Activated CD4-positive, alpha-beta T cell treated with anti-CD3 and anti-CD28 coated beads, Interleukin-2, amount 10 ng/mL, durations not matched to agents 24 days and 14 days (primary cell): ENCODE measurements at regions of chr11 and their contacts with region 1.

Region 1: GRCh38 chr11:57335343-57336110 is at the start of gene SSRP1:
- DNase-seq: peak; percentile 95
- H3K4me3 Mint-ChIP-seq: peak within 1 kb of the TSS; percentile 93
- H3K27ac Mint-ChIP-seq: peak within 1 kb of the TSS; percentile 99
- H3K4me1 Mint-ChIP-seq: peaks cover 35% of the 10 kb centered on the region
- H3K27me3 Mint-ChIP-seq: no peaks in the 10 kb centered on the region
- total RNA-seq, gene SSRP1: 253 and 256 TPM in 2 replicates

Region 2: DNA sequence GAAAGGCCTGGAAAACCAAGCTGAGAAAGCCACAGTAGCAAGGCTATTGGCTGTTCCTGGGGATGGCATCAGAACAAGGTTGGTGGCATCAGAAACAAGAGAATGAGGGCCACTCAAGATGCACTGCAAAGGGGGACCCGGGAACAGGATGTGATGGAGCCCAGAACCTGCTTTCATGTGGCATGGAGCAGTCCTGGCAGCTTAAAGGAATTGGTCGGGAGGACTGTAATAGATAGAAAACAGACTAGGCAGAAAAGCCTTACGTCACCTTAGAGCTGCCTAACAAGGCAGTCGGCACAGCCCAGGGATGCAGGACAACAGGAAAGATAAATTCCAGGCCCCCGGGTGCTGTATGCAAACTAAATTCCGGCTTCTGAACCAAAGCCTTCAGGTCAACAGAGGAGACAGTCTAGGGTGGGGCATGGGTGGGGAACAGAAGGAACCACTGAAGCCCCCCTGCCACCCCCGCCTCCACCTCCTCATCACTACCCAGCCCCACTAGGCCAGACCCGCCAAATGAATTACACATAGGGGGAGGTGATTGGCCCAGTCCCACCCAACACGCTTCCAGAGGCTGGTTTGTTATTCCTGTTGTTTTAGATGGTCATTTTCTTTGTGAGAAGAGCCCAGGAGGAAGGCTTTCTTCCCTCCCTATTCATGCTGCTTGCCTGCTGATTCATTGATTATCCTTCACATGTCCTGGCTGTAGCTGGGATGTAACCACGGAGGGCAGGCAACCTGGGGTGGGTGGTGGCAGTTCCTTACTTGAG is 179.5 kb before region 1 on chr11:
- intact Hi-C with region 1: no loop called
- DNase-seq: no peak
- H3K4me3 Mint-ChIP-seq: no peak overlapping the region
- H3K27ac Mint-ChIP-seq: no peak overlapping the region
- H3K4me1 Mint-ChIP-seq: no peaks in the 10 kb centered on the region
- H3K27me3 Mint-ChIP-seq: peaks cover 8% of the 10 kb centered on the region

Region 3: DNA sequence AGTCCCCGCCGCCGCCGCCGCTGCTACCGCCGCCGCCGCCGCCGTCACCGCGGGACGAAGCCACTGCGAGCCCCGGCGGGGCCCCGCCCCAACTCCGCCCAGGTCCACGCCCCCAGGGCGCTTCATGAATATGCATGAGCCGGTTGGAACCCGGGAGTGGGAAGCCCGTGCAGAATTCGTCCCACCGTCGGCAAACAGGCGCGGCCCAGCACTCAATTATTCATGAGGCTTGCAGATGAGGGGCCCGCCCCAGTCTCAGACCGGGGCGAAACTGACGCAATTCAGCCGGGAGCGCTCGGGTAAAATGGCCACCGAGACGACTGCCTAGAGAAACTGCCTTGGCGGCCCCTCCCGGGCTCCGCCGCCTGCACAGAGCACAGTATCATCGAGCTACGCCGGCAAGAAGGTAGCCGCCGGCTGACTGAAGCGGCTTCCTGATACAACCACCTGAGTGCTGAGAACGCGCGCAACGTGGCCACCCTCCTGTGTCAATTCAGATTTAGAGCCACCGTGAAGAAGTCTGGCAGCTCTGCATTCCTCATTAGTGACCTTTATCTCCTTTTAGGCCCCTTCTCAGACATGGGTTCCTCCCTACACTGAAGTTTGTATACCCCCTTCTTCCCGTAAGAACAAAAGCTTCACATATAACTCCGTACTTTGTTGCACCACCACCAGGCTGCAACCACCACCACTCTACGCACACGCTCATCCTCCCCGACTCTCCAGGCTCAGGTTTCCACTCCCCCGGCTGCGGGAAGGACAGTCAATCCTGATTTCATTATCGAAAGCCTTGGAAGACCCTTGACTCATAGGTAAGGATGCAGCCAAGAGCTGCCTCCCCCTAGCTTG is 10.4 kb before region 1 on chr11 and contains the start of gene TNKS1BP1:
- intact Hi-C with region 1: loop called (anchors 1 kb)
- DNase-seq: peak; percentile 96
- H3K4me3 Mint-ChIP-seq: peak within 1 kb of the TSS; percentile 83
- H3K27ac Mint-ChIP-seq: peak within 1 kb of the TSS; percentile 93
- H3K4me1 Mint-ChIP-seq: peaks cover 45% of the 10 kb centered on the region
- H3K27me3 Mint-ChIP-seq: no peaks in the 10 kb centered on the region
- total RNA-seq, gene TNKS1BP1: 23.7 and 24.2 TPM in 2 replicates

Region 4: DNA sequence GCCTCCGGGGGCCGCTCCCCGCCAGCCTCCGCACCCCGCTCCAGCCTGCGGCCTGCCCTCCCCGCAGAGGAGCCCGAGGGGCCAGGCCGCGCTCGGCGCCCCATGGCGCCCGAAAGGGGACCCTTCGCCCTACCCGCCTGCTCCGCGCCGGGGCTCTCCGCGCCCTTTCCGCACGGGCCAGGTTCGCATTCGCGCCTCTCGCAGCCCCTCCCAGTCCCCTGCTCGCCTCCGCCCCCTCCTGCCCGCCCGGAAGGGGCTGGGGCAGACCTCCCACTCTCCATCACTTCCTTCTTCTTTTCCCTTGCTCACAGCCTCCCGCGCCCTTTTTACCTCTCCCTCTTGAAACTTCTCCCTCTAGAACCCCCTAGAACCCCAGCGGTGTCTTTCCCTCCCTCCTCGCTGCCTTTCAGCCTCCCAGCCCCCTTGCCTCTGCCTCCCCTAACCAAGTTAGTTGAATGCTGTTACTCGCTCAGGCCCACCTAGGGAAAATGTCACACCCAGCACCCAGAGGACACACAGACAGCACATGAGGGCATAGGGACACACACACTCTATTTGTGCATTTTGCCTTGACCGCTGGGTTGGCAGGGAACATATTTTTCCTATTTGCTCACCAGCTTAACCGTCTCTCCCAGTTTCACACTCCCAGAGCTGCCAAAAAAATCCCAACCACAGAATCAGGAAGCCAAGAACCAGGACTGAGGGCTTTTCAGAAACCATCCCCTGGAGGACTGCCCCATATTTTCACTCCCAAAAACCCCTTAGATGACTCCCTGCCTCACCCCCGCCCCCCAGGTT is 91.6 kb after region 1 on chr11 and contains the start of gene SLC43A3:
- intact Hi-C with region 1: loop called (anchors 2 kb)
- DNase-seq: peak; percentile 91
- H3K4me3 Mint-ChIP-seq: peak within 1 kb of the TSS; percentile 96
- H3K27ac Mint-ChIP-seq: peak within 1 kb of the TSS; percentile 95
- H3K4me1 Mint-ChIP-seq: peaks cover 43% of the 10 kb centered on the region
- H3K27me3 Mint-ChIP-seq: peaks cover 9% of the 10 kb centered on the region
- total RNA-seq, gene SLC43A3: 255 and 261 TPM in 2 replicates

Region 5: DNA sequence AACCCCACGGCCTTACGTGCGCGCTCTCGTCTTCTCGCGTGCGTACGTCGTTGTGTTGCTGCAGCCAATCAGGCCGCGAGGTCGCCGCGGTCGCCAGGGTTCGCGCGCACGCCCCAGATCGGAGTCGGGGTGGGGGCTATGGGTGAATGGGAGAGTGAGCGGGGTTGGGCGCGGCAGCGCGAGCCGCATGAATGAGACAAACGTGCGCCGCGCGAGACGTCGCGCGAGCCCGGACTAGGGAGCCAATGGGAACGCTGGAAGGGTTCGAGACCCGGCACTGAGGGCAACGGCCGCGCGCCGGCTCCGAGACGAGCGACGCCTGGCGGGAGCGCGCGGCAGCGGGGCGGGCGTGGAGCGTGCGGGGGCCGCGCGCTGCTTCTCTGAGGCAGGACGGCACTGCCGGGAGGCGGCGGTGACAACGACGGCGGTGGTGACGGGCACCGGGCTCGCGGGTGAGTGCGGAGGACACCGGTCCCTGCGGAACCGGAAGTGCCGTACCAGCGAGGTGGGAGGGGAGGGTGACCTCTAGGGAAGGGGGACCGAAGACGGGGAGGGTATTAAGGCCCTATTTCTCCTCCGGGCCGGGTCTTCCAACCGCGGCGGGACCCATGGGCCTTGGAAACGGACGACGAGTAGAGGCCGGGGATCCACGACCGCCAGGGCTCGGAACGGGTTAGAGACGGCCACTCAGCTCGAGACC is 332.4 kb after region 1 on chr11 and contains the start of gene ZDHHC5:
- intact Hi-C with region 1: loop called (anchors 5 kb)
- DNase-seq: peak; percentile 100
- H3K4me3 Mint-ChIP-seq: peak within 1 kb of the TSS; percentile 86
- H3K27ac Mint-ChIP-seq: peak within 1 kb of the TSS; percentile 97
- H3K4me1 Mint-ChIP-seq: peaks cover 35% of the 10 kb centered on the region
- H3K27me3 Mint-ChIP-seq: no peaks in the 10 kb centered on the region
- total RNA-seq, gene ZDHHC5: 78.4 and 80.9 TPM in 2 replicates